Dorsolateral prefrontal cortex (tissue), 120 donors: ENCODE measurements at regions of chr3 and their contacts with region 1.

Region 1: DNA sequence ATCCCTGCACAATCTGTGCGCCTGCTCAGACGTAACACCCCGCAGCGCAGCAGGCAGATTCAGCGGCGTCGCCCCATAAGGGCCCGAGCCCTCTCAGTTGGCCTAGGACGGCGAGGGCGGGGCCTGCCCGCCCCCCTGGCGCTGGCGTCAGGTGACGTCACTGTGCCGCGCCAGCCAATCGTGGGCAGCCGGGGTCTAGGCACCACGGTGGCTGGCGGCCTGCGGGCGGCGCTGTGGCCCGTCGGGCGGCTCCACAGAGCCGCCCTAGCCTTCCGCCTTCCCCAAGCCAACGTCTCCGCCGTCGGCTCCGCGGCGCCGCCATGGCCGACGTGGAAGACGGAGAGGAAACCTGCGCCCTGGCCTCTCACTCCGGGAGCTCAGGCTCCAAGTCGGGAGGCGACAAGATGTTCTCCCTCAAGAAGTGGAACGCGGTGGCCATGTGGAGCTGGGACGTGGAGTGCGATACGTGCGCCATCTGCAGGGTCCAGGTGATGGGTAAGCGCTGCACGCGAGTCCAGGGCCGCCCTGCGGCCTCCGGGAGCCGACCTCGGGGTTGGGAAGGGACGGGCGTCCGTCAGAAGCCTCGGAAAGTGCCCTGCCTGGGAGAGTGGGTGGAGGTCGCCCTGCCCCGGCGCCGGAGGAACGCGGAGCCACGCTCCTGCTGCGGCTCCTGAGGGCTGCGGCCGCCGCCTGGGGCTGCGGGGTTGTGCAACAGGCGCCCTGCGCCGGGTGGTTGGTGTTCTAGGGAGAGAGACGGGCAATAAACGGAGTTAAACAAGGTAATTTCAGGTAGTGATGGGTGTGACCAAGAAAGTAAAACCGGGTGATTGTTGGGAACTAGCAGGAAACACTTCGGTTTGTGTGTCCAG is at the start of gene RNF7:
- DNase-seq: peak; percentile 89 to 96 (median 92)
- H3K4me3 ChIP-seq: peak within 1 kb of the TSS; percentile 71 to 100 (median 94)
- H3K27ac ChIP-seq: peak within 1 kb of the TSS; percentile 53 to 98 (median 93)
- H3K27me3 ChIP-seq: no peaks in the 10 kb centered on the region
- CTCF ChIP-seq: peak; percentile 64 to 99 (median 94)
- total RNA-seq, gene RNF7: 33.6 to 68.4 (median 46.7) TPM

Region 2: DNA sequence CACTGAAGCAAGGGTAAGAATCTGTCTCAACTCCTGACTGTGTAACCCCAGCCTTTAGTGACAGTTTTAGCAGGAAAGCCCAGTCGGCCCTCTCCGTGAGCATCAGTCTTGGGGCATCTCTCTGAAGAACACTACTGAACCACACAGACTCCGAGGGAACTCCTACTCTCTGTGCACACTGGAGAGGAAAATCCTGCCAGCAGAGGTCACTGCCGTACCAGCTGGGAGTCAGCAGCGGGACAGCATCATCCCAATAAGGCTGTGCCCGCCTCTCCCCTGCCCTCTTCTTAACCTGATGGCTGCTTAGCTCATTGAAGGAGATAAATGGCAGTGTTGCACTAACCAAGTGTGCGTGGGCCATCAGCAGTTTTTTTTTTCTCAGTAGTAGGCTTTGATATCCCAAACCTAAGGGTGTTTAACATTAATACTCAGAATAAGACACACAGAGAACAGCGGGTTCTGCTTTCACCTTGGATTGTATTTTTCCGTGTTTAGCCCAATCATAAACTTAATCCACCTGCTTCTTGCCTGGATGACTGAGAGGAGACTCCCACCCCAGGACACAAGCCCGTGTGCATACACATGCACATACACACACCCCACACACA is 278.1 kb before region 1 on chr3:
- intact Hi-C with region 1: loop called in 1 of 2 experiments (anchors 10 kb)
- DNase-seq: peak; percentile 80 to 92 (median 88)
- H3K4me3 ChIP-seq: no peak overlapping the region
- H3K27ac ChIP-seq: no peak overlapping the region
- H3K27me3 ChIP-seq: no peaks in the 10 kb centered on the region
- CTCF ChIP-seq: peak; percentile 50 to 98 (median 90)

Region 3: DNA sequence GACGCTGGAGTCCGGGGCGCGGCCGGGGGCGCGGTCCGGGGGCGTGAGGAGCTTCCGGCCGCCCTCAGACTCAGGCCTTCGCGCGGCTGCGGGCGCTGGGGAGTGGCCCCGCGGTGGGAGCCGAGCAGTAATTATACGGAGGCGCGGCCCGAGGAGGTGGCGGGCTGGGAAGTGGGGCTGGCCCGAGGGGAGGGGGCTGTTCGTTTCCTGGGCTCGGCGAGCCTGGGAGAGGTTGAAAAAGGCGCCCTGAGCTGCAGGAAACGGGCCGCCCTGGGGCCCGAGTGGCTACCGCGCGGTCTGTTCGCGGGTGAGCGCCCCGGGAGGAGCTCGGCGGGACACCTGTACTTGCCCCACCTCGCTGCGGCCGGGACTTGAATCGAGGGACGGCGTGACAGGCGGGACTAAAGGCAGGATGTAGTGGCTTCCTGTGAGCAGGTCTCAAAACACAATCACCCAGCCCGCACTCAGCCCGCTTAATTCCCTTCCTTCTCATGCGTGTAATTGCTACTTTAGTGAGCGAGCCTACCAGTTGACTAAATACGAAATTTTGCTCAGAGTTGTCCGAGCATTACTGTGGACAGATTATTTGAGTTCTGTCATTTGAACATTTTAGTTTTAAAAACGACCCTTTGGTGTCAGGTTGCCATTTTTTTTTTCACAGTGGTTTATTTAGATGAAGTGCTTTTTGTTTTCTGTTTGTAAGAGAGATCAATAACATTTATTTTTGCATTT is 250.6 kb before region 1 on chr3:
- intact Hi-C with region 1: loop called in 1 of 2 experiments (anchors 10 kb)
- DNase-seq: peak in 9 of 10 donors; percentile 37 to 74 (median 62)
- H3K4me3 ChIP-seq: peak overlapping the region; percentile 39 to 93 (median 82)
- H3K27ac ChIP-seq: peak overlapping the region in 57 of 59 donors; percentile 9 to 95 (median 85)
- H3K27me3 ChIP-seq: no peaks in the 10 kb centered on the region
- CTCF ChIP-seq: peak in 3 of 56 donors; percentile 3 to 17 (median 5)

Region 4: DNA sequence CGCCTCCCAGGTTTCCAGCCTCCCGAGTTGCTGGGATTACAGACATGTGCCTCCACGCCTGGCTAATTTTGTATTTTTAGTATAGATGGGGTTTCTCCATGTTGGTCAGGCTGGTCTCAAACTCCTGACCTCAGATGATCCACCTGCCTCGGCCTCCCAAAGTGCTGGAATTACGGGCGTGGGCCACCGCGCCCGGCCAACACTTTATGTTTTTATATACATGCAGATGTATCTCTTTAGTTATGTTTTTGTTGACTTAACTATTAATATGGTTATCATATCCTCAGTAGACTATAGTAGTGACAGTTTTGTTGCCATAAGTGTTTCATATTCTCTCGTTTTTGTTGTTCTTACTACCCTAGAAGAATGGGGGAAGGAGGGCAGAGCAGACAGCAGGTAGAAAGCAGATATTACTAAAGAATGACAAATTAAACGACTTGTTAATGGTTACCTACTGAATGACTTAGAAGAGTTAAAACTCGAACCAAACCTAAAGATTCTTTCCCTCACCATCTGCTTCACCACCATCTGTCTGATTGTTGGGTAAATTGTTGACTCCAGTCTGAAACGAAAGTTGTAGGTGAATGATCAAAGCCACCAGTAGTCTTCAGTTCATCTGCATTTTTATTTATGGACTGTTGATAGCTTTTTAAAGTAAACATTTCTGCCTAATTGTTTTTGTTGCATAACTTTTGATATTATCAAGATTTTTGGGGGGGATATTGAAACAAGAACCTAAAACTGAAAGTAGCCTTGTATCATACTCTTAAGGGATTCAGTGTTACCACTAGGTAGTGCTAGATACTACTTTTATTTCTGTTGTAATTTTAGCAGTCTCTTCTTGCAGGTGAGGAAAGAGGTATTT is 162.1 kb before region 1 on chr3:
- intact Hi-C with region 1: loop called in 1 of 2 experiments (anchors 5 kb)
- DNase-seq: no peak
- H3K4me3 ChIP-seq: peak overlapping the region in 6 of 59 donors; percentile 7 to 36 (median 9)
- H3K27ac ChIP-seq: peak overlapping the region in 1 of 59 donors; percentile 6
- H3K27me3 ChIP-seq: no peaks in the 10 kb centered on the region
- CTCF ChIP-seq: peak in 55 of 56 donors; percentile 38 to 78 (median 56)

Region 5: GRCh38 chr3:141686466-141687291 is 51.6 kb before region 1 on chr3:
- intact Hi-C with region 1: loop called in 1 of 2 experiments (anchors 5 kb)
- DNase-seq: peak; percentile 20 to 88 (median 71)
- H3K4me3 ChIP-seq: peak overlapping the region; percentile 7 to 68 (median 44)
- H3K27ac ChIP-seq: peak overlapping the region in 57 of 59 donors; percentile 11 to 91 (median 73)
- H3K27me3 ChIP-seq: no peaks in the 10 kb centered on the region
- CTCF ChIP-seq: peak in 2 of 56 donors; percentile 12 to 21

Region 6: GRCh38 chr3:141998669-141999290 is 260.5 kb after region 1 on chr3:
- intact Hi-C with region 1: loop called in 1 of 2 experiments (anchors 5 kb)
- DNase-seq: no peak
- H3K4me3 ChIP-seq: no peak overlapping the region
- H3K27ac ChIP-seq: no peak overlapping the region
- H3K27me3 ChIP-seq: no peaks in the 10 kb centered on the region
- CTCF ChIP-seq: peak in 50 of 56 donors; percentile 13 to 72 (median 50)